A549 (cell line): ENCODE measurements at regions of chr7 and their contacts with region 1.

Region 1: GRCh38 chr7:130804220-130804619 is 70.2 kb upstream of the KLF14 start:
- DNase-seq: no peak
- ATAC-seq: no peak
- H3K4me3 ChIP-seq: no peak overlapping the region
- H3K27ac ChIP-seq: no peak overlapping the region
- H3K4me1 ChIP-seq: no peaks in the 10 kb centered on the region
- CTCF ChIP-seq: no peak
- EP300 ChIP-seq: no peak
- POLR2A ChIP-seq: no peak
- RAD21 ChIP-seq: no peak

Region 2: DNA sequence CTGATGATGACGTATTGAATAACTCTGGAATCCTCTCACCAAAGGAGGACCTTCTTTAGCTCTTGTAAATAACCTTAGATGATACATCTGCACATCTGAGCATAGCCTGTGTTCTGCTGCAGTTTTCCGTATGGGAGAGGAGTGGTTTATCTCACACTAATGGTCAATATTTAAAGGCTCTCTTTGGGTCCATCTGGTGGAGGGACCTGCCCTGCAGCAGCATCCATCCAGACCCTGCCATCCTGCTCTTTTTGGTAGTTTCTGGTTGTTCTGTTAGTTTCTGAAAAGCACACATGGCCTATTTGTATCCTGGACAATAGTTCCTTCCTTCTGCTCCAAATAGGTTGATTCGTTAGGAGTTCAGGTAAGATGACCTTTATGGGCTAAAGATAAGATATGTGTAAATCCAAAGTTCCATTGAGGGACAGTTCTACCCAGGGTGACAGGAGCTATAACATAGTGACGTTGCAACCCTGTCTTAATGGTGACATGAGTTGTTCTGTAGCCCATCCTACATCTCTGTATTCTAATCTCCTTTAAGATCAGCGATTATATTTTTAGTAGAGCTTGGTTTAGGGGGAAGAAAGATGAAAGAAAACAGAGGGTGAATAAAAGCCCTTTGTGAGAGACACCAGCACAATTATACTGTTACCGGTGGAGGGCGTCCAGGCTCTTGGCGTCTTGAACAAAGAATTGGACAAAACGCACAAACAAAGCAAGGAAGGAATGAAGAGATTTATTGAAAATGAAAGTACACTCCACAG is 10.2 kb before region 1 on chr7:
- CTCF ChIA-PET with region 1: interaction called, 10 read pairs
- POLR2A ChIA-PET with region 1: no interaction called
- DNase-seq: peak in 1 of 2 experiments; percentile 11
- ATAC-seq: peak; percentile 70 to 80; a peak in 5 of 6 replicates
- H3K4me3 ChIP-seq: peak overlapping the region; percentile 22; the same call in 1 of the 3 replicates
- H3K27ac ChIP-seq: 0 out of 6 replicates have a peak overlapping the region, but pooled peaks of 1 of the 2 experiments have one; percentile 30
- H3K4me1 ChIP-seq: no peaks in the 10 kb centered on the region
- CTCF ChIP-seq: no peak
- EP300 ChIP-seq: no peak
- POLR2A ChIP-seq: no peak
- RAD21 ChIP-seq: 0 out of 5 replicates have a peak, but pooled peaks of 1 of the 2 experiments have one; percentile 11

Region 3: DNA sequence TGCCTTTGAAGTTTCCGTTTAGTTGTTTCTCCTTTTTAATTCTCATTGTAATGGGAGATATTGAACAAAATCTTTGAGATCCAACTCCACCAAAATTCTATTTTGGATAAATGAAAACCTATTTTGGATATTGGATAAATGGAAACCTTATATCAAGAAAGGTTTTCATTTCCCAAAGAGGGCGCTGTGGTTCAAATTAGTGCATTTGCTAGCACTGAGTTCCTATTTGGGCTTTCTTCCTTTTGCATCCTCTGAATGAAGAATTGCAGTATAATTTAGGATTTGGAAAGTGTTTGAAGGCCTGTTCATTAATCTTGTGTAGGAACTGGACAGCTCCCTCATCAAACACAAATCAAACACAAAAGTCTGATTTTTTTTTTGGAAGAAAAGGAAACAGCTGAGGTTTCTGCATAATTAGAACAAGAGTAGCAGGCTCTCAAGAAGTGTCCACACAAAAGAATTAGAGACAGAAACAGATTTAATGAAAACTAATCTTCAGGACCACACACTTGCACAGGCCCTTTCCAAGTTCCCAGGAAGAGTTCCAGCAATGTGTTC is 10.6 kb after region 1 on chr7:
- CTCF ChIA-PET with region 1: no interaction called
- POLR2A ChIA-PET with region 1: no interaction called
- DNase-seq: peak in 1 of 2 experiments; percentile 32
- ATAC-seq: peak in 1 of 2 experiments; percentile 39; a peak in 1 of 6 replicates
- H3K4me3 ChIP-seq: no peak overlapping the region
- H3K27ac ChIP-seq: no peak overlapping the region
- H3K4me1 ChIP-seq: peaks cover 4% of the 10 kb centered on the region; the same call in 2 of the 3 replicates
- CTCF ChIP-seq: peak; percentile 40; the same call in 2 of the 3 replicates
- EP300 ChIP-seq: no peak
- POLR2A ChIP-seq: no peak
- RAD21 ChIP-seq: peak in 1 of 2 experiments; percentile 52; a peak in 2 of 5 replicates

Region 4: DNA sequence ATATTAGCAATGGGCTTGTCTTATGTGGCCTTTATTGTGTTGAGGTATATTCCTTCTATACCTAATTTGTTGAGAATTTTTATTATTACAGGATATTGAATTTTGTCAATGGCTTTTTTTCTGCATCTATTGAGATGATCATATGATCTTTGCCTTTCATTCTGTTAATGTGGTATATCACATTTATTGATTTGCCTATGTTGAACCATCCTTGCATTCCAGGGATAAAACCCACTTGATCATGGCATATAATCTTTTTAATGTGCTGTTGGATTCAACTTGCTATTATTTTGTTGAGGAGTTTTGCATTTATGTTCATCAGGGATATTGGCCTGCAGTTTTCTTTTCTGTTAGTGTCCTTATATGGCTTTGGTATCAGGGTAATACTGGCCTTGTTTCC is 21.6 kb after region 1 on chr7:
- CTCF ChIA-PET with region 1: no interaction called
- POLR2A ChIA-PET with region 1: no interaction called
- DNase-seq: no peak
- ATAC-seq: no peak
- H3K4me3 ChIP-seq: no peak overlapping the region
- H3K27ac ChIP-seq: no peak overlapping the region
- H3K4me1 ChIP-seq: no peaks in the 10 kb centered on the region
- CTCF ChIP-seq: no peak
- EP300 ChIP-seq: no peak
- POLR2A ChIP-seq: no peak
- RAD21 ChIP-seq: no peak